ENCODE measurements at regions of chr14 and their contacts with region 1.

Region 1: DNA sequence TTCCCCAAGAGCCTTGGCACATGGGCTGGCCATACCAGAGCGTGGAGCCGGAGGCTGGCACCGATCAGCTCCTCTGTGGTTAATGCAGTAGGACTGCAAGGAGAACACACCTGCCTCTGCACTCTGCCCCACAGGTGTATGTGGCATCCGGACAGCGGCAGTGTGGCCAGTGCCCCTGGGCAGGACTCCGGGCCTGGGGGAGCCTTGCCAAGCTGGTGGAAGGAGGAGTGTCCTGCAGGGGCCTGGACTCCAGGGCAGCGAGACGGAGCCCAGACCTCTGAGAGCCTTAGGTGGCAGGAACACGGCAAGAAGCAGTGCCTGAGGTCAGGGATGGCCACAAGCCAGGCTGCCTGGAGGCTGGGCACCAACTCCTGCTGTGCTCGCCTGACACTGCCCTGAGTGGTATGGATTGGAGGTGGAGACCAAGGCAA is 5.3 kb upstream of the BEGAIN start:
- DNase-seq: no peak
- H3K4me3 ChIP-seq: no peak overlapping the region
- H3K27ac ChIP-seq: no peak overlapping the region
- H3K4me1 ChIP-seq: no peaks in the 10 kb centered on the region
- H3K27me3 ChIP-seq: peaks cover 0 to 5% of the 10 kb centered on the region in 2 donors
- CTCF ChIP-seq: no peak
- POLR2A ChIP-seq: no peak

Region 2: GRCh38 chr14:99755629-99756603 is 836.6 kb before region 1 on chr14:
- intact Hi-C with region 1: loop called (anchors 5 kb)
- DNase-seq: peak in 1 of 2 donors; percentile 39
- H3K4me3 ChIP-seq: no peak overlapping the region
- H3K27ac ChIP-seq: no peak overlapping the region
- H3K4me1 ChIP-seq: no peaks in the 10 kb centered on the region
- H3K27me3 ChIP-seq: peaks cover 0 to 5% of the 10 kb centered on the region in 2 donors
- CTCF ChIP-seq: no peak
- POLR2A ChIP-seq: no peak

Region 3: GRCh38 chr14:99872786-99873440 is 719.6 kb before region 1 on chr14:
- intact Hi-C with region 1: no loop called
- DNase-seq: no peak
- H3K4me3 ChIP-seq: no peak overlapping the region
- H3K27ac ChIP-seq: no peak overlapping the region
- H3K4me1 ChIP-seq: no peaks in the 10 kb centered on the region
- H3K27me3 ChIP-seq: no peaks in the 10 kb centered on the region
- CTCF ChIP-seq: no peak
- POLR2A ChIP-seq: no peak

Measured in breast epithelium (tissue), 4 donors.